ENCODE measurements at regions of chr1 and their contacts with region 1.

Region 1: GRCh38 chr1:21368515-21369289 is 71.2 kb upstream of the NBPF3 start:
- DNase-seq: peak; percentile 52
- ATAC-seq: peak; percentile 45
- H3K4me3 Mint-ChIP-seq: no peak overlapping the region
- H3K27ac Mint-ChIP-seq: no peak overlapping the region
- H3K4me1 Mint-ChIP-seq: peaks cover 26% of the 10 kb centered on the region
- H3K27me3 Mint-ChIP-seq: no peaks in the 10 kb centered on the region
- CTCF ChIP-seq: peak; percentile 57

Region 2: DNA sequence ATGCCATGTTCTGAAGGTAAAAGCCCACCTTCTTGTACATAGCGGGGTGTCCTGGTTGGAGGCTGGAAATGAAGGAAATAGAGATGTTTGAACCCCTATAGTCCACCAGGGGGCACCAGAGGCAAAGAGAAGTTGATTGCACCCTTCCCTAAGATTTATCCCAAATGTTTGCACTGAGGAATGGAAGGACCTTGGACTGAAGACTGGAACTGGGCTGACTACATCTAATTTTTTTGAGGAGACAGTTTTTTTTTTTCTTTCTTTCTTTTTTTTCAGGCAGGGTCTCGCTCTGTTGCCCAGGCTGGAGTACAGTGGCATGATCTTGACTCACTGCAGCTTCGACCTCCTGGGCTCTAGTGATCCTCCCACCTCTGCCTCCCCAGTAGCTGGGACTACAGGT is 136.7 kb before region 1 on chr1:
- CTCF ChIA-PET with region 1: interaction called, 105 read pairs
- POLR2A ChIA-PET with region 1: interaction called, 7 read pairs
- intact Hi-C with region 1: loop called (anchors 1 kb)
- DNase-seq: no peak
- ATAC-seq: peak; percentile 72
- H3K4me3 Mint-ChIP-seq: no peak overlapping the region
- H3K27ac Mint-ChIP-seq: no peak overlapping the region
- H3K4me1 Mint-ChIP-seq: no peaks in the 10 kb centered on the region
- H3K27me3 Mint-ChIP-seq: no peaks in the 10 kb centered on the region
- CTCF ChIP-seq: peak; percentile 43

Region 3: GRCh38 chr1:21255278-21255942 is 113.3 kb before region 1 on chr1:
- CTCF ChIA-PET with region 1: interaction called, 247 read pairs
- POLR2A ChIA-PET with region 1: interaction called, 31 read pairs
- intact Hi-C with region 1: loop called (anchors 1 kb)
- DNase-seq: peak; percentile 66
- ATAC-seq: peak; percentile 79
- H3K4me3 Mint-ChIP-seq: no peak overlapping the region
- H3K27ac Mint-ChIP-seq: peak overlapping the region; percentile 69
- H3K4me1 Mint-ChIP-seq: peaks cover 24% of the 10 kb centered on the region
- H3K27me3 Mint-ChIP-seq: no peaks in the 10 kb centered on the region
- CTCF ChIP-seq: no peak

Region 4: GRCh38 chr1:21280011-21280471 is 88.7 kb before region 1 on chr1:
- CTCF ChIA-PET with region 1: interaction called, 13 read pairs
- POLR2A ChIA-PET with region 1: interaction called, 5 read pairs
- intact Hi-C with region 1: no loop called
- DNase-seq: no peak
- ATAC-seq: peak; percentile 43
- H3K4me3 Mint-ChIP-seq: peak overlapping the region; percentile 29
- H3K27ac Mint-ChIP-seq: peak overlapping the region; percentile 81
- H3K4me1 Mint-ChIP-seq: peaks cover 44% of the 10 kb centered on the region
- H3K27me3 Mint-ChIP-seq: no peaks in the 10 kb centered on the region
- CTCF ChIP-seq: no peak

Region 5: GRCh38 chr1:21334214-21335087 is 34.3 kb before region 1 on chr1:
- CTCF ChIA-PET with region 1: interaction called, 13 read pairs
- POLR2A ChIA-PET with region 1: interaction called, 4 read pairs
- intact Hi-C with region 1: no loop called
- DNase-seq: peak; percentile 67
- ATAC-seq: peak; percentile 83
- H3K4me3 Mint-ChIP-seq: peak overlapping the region; percentile 87
- H3K27ac Mint-ChIP-seq: peak overlapping the region; percentile 94
- H3K4me1 Mint-ChIP-seq: peaks cover 89% of the 10 kb centered on the region
- H3K27me3 Mint-ChIP-seq: no peaks in the 10 kb centered on the region
- CTCF ChIP-seq: no peak

Region 6: GRCh38 chr1:21534674-21535378 is 166.1 kb after region 1 on chr1:
- CTCF ChIA-PET with region 1: interaction called, 4 read pairs
- POLR2A ChIA-PET with region 1: no interaction called
- intact Hi-C with region 1: loop called (anchors 2 kb)
- DNase-seq: no peak
- ATAC-seq: peak; percentile 74
- H3K4me3 Mint-ChIP-seq: no peak overlapping the region
- H3K27ac Mint-ChIP-seq: no peak overlapping the region
- H3K4me1 Mint-ChIP-seq: peaks cover 5% of the 10 kb centered on the region
- H3K27me3 Mint-ChIP-seq: peaks cover 19% of the 10 kb centered on the region
- CTCF ChIP-seq: no peak

Region 7: DNA sequence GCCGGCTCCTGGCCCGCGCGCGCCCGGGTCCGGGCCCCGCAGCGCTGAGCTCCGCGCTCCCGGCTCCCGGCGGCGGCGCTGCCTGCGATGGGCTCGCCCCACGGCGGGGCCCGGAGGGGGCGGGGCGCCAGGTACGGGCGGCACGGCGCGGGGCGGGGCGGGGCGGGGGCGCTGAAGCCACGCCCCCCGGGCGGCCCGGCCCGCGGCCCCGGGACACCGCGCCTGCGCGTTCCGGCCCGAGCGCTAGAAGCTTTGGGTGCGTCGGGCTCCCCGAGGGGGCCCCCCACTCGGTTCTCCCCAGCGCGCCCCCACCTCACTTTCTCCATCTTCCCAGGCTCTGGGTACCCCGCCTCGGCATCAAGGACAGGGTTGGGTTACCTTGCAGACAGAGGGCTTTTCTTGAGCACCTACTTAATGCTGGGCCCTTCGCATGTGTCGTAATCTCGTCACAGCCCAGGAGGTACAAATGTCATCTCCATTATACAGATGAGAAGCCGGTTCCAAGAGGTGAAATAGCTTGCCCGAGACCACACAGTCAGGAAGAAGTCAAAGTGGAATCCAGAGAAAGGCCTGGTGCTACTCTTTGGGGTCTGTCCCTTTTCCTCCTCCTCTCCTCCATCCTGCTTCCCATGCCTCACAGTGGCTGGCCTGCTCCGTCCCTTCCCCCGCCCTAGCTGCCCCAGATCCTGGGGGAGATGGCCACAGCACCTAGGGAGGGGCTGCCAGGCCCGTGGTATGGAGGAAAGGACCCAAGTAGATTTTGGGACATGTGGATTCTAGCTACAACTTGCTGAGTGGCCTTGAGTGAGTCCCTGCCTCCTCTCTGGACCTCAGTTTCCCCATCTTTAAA is 254.0 kb after region 1 on chr1:
- CTCF ChIA-PET with region 1: no interaction called
- POLR2A ChIA-PET with region 1: no interaction called
- intact Hi-C with region 1: no loop called
- DNase-seq: peak; percentile 45
- ATAC-seq: peak; percentile 88
- H3K4me3 Mint-ChIP-seq: peak overlapping the region; percentile 75
- H3K27ac Mint-ChIP-seq: no peak overlapping the region
- H3K4me1 Mint-ChIP-seq: peaks cover 9% of the 10 kb centered on the region
- H3K27me3 Mint-ChIP-seq: peaks cover 32% of the 10 kb centered on the region
- CTCF ChIP-seq: no peak

Region 8: DNA sequence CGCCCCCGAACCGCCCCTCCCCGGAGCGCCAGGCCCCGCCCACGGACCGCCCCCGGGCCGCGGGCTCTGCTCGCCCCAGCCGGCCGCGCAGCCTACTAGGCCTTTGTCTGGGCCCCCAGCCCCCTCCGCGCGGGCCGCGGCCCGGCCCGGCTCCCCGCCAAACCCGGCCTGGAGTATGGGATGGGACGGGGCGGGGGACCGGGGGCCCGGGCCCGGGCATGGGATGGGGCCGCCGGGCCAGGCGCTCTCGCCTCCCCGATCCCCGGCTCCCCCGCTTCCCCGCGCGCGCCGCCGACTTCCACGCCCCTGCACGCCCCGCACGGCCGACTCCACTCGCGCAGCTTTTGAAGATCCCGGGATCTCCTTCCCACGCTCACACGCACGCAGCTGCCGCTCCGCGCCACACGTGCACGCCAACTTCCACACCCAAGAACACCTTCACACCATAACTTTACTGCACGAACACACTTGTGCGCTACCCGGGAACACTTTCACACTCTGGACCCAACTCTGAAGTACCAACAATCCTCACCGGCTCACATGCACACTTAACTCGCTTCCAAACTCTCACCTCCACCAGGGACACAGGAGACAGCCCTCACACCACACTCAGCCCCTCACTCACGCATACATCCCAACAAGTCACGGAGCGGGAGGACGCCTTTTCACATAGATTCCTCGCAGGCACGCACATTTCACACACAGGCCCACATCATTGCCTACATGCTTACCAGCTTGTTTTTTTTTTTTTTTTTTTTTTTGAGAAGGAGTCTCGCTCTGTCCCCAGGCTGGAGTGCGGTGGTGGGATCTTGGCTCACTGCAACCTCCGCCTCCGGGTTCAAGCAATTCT is 568.9 kb after region 1 on chr1:
- CTCF ChIA-PET with region 1: no interaction called
- POLR2A ChIA-PET with region 1: no interaction called
- intact Hi-C with region 1: no loop called
- DNase-seq: peak; percentile 71
- ATAC-seq: peak; percentile 95
- H3K4me3 Mint-ChIP-seq: peak overlapping the region; percentile 84
- H3K27ac Mint-ChIP-seq: peak overlapping the region; percentile 27
- H3K4me1 Mint-ChIP-seq: peaks cover 7% of the 10 kb centered on the region
- H3K27me3 Mint-ChIP-seq: peaks cover 24% of the 10 kb centered on the region
- CTCF ChIP-seq: no peak

Measured in activated B cell treated with CpG ODN at 0.5 μM for 24 hours (primary cell).